ENCODE measurements at regions of chr12 and their contacts with region 1.

Region 1: GRCh38 chr12:8681041-8681902 is 16.5 kb upstream of the RIMKLB start:
- DNase-seq: no peak

Region 2: GRCh38 chr12:8541562-8541961 is 139.7 kb before region 1 on chr12:
- intact Hi-C with region 1: no loop called
- DNase-seq: no peak

Region 3: GRCh38 chr12:8734873-8735381 is 53.7 kb after region 1 on chr12:
- intact Hi-C with region 1: no loop called
- DNase-seq: no peak

Region 4: GRCh38 chr12:8823565-8824300 is 142.5 kb after region 1 on chr12:
- intact Hi-C with region 1: loop called (anchors 2 kb)
- DNase-seq: no peak

Region 5: GRCh38 chr12:9039397-9039977 is 358.2 kb after region 1 on chr12:
- intact Hi-C with region 1: loop called (anchors 5 kb)
- DNase-seq: no peak

Measured in cardiac septum (tissue), 1 donor.